Transverse colon (tissue), 4 donors: ENCODE measurements at regions of chr10 and their contacts with region 1.

Region 1: DNA sequence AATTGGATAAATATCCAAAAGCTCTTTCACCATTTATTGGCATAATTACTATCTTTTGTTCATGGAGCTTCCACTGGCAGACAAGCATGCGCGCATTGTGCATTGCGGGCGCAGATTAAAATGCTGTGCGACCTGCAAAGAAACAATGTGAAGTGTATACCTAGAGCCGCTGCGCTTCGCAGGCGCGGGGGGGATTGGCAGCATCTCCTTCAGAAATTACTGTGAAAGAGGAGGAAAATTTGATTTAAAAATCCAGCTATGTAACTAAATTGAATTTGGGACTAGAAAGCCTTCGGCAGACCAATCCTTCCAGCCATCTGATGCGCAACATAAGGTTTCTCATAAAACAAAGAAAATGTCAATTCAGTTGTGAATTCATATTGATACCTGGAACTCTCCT is 10.3 kb upstream of the NPM3 start:
- DNase-seq: no peak
- H3K4me3 ChIP-seq: no peak overlapping the region
- H3K27ac ChIP-seq: no peak overlapping the region
- H3K4me1 ChIP-seq: no peaks in the 10 kb centered on the region
- H3K27me3 ChIP-seq: no peaks in the 10 kb centered on the region
- CTCF ChIP-seq: no peak
- EP300 ChIP-seq: no peak
- POLR2A ChIP-seq: no peak

Region 2: DNA sequence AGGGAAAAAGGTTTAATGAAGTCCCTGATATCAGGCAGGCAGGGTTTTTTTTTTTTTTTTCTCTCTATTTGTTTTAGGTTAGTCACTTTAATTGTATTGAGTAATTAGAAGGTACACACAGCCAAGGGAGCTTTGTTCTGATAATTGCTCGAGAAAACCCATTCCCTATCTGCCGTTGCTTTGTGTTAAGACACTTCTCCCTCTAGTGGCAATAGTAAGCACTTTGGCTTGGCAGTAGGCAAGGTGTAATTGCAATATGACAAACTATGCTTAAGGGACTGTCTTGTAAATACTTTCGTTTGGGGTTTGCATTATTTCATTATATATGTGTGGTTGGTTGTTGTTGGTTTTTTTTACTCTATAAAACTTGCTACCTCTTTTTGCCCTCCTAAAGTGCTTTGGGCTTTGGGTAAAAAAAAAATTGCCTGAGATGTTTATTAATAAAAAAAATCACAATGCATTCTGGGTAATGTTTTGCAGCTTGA is 326.2 kb before region 1 on chr10:
- in situ Hi-C with region 1: no loop called
- intact Hi-C with region 1: loop called (anchors 5 kb)
- DNase-seq: no peak
- H3K4me3 ChIP-seq: no peak overlapping the region
- H3K27ac ChIP-seq: no peak overlapping the region
- H3K4me1 ChIP-seq: peaks cover 0 to 15% (median 9%) of the 10 kb centered on the region in 4 donors
- H3K27me3 ChIP-seq: no peaks in the 10 kb centered on the region
- CTCF ChIP-seq: peak; percentile 67 to 76 (median 73)
- EP300 ChIP-seq: no peak
- POLR2A ChIP-seq: no peak

Region 3: GRCh38 chr10:101818119-101818871 is 24.8 kb after region 1 on chr10 and contains the start of gene OGA:
- in situ Hi-C with region 1: no loop called
- intact Hi-C with region 1: no loop called
- DNase-seq: peak; percentile 98
- H3K4me3 ChIP-seq: peak within 1 kb of the TSS; percentile 86 to 98 (median 91)
- H3K27ac ChIP-seq: peak within 1 kb of the TSS; percentile 96 to 99 (median 98)
- H3K4me1 ChIP-seq: peaks cover 2 to 41% (median 36%) of the 10 kb centered on the region in 4 donors
- H3K27me3 ChIP-seq: no peaks in the 10 kb centered on the region
- CTCF ChIP-seq: no peak
- EP300 ChIP-seq: peak; percentile 37
- POLR2A ChIP-seq: peak; percentile 97
- total RNA-seq, gene OGA: 114 to 608 (median 172) TPM